Ovary (tissue), 10 donors: ENCODE measurements at regions of chr9 and their contacts with region 1.

Region 1: GRCh38 chr9:71891557-71892189 is 19.3 kb downstream of the ABHD17B start:
- DNase-seq: no peak
- H3K4me3 ChIP-seq: no peak overlapping the region
- H3K27ac ChIP-seq: no peak overlapping the region
- H3K4me1 ChIP-seq: no peaks in the 10 kb centered on the region
- H3K27me3 ChIP-seq: no peaks in the 10 kb centered on the region
- CTCF ChIP-seq: no peak
- EP300 ChIP-seq: no peak
- POLR2A ChIP-seq: no peak

Region 2: DNA sequence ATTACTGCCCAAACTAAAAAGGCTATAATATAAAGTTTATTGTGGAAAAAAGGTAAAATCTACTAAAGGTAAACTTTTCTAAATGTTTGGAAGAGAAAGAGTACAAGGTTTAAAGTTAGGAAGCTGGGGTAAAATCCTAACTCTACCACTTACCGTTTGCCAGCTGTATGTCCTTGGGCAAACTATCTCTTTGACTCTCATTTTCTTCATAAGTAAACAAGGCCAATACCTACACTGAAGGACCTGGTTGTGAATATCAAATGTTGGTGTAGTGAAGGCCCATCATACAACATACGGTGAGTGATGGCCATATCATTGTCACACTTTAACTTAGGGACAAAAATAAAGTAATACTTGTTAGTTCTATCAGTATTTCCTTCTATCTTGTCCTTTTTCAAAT is 15.6 kb before region 1 on chr9:
- intact Hi-C with region 1: loop called in 1 of 4 experiments (anchors 2 kb)
- DNase-seq: no peak
- H3K4me3 ChIP-seq: no peak overlapping the region
- H3K27ac ChIP-seq: no peak overlapping the region
- H3K4me1 ChIP-seq: no peaks in the 10 kb centered on the region
- H3K27me3 ChIP-seq: no peaks in the 10 kb centered on the region
- CTCF ChIP-seq: no peak
- EP300 ChIP-seq: no peak
- POLR2A ChIP-seq: no peak